Activated T-helper 1 cell treated with anti-CD3 and anti-CD28 coated beads, Interleukin-12 subunit alpha, Interleukin-12 subunit beta, Interleukin-2, Interleukin-4 antibody, amounts not matched to agents 30 ng/mL and 10 ng/mL and 1 ng/mL, durations not matched to agents 14 hours and 24 hours and 36 hours (primary cell): ENCODE measurements at regions of chr13 and their contacts with region 1.

Region 1: DNA sequence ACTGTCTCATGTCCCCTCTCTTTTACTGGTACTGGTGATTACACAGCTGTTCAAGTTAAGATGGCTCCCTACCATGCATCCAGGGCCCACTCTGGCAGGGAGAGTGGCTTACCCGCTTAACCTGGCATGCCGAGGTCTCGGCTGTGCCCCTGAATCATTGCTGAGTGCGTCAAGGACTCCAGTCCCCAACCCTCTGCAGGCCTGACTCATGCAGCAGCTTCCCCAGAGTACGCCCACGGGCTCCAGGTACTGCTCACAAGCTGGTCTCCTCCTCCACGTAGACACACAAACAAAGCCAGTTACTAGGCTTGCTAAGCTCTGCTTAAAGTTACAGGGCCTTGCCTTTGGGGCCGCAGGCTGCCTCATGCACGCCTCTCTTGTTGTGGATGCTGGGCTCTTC is 447.4 kb downstream of the COG6 start:
- DNase-seq: peak; percentile 51
- H3K4me3 Mint-ChIP-seq: peak overlapping the region; percentile 74
- H3K27ac Mint-ChIP-seq: peak overlapping the region; percentile 97
- H3K4me1 Mint-ChIP-seq: peaks cover 64% of the 10 kb centered on the region
- H3K27me3 Mint-ChIP-seq: no peaks in the 10 kb centered on the region

Region 2: DNA sequence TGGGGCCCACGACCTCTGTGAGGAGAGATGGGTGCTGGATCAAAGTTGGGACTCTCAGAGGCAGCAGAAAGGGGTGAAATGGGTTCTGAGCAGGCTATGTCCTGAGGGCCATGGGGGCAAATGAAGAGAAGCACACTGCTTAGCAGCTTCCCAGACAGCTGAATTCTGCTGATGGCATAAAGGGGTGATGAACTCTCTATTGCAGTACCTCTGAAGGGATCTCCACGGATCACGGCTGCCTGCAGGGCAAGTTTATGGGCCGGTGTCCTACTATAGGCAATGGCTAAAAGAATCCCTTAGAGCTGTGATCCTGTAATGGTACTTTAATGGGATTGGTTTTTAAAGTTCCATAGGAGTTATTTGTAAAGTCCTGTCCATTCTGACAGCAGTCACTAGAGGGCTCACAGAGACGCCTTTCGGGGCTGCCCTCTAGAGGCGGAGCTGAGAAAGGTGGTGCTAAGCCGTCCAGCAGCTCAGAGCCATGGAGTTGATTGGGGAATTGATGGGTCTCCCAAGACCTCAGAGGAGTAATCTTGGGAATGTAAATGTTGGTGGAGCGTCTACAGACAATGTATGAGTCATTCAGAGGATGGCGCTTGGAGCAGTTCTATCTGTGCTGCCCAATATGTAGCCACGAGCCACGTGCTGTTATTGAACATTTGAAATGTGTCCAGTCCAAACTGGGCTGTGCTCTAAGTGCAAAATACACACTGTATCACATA is 160.1 kb before region 1 on chr13:
- intact Hi-C with region 1: loop called (anchors 5 kb)
- DNase-seq: peak; percentile 54
- H3K4me3 Mint-ChIP-seq: no peak overlapping the region
- H3K27ac Mint-ChIP-seq: no peak overlapping the region
- H3K4me1 Mint-ChIP-seq: peaks cover 6% of the 10 kb centered on the region
- H3K27me3 Mint-ChIP-seq: peaks cover 4% of the 10 kb centered on the region

Region 3: DNA sequence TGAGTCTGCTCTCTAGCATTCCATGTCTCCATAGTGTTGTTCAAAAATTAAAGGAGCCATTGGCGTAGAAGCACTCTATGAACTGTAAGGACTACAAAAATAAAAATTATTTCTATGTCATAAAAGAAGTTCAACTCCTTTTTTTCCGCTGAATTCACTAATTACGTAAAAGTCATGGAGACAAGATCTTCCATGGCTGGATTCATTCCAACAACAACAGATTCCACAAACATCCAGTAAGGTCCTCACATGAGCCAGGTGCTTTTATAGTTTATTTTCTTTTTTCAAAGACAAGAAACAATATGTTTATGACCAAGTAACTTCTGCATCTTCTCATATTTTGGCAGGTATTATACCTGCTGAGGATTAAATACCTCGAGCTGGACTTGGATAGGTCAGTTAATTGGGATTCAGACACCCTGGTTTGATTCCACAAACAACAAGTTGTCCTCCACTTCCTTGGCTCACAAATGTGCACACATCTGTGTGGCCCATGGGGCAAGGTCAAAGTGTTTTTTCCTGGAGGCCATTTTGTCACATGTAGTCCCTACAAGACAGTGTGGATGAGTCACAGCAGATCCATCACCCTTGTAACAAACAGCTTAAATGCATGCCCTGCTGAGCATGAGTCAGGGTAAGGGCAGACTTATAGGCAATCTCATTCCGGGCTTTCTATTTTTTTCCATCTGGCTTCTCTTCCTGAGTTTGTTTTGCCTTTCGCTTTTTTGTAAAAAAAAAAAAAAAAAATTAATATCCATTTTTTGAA is 28.2 kb after region 1 on chr13:
- intact Hi-C with region 1: loop called (anchors 1 kb)
- DNase-seq: no peak
- H3K4me3 Mint-ChIP-seq: no peak overlapping the region
- H3K27ac Mint-ChIP-seq: peak overlapping the region; percentile 12
- H3K4me1 Mint-ChIP-seq: peaks cover 63% of the 10 kb centered on the region
- H3K27me3 Mint-ChIP-seq: no peaks in the 10 kb centered on the region

Region 4: DNA sequence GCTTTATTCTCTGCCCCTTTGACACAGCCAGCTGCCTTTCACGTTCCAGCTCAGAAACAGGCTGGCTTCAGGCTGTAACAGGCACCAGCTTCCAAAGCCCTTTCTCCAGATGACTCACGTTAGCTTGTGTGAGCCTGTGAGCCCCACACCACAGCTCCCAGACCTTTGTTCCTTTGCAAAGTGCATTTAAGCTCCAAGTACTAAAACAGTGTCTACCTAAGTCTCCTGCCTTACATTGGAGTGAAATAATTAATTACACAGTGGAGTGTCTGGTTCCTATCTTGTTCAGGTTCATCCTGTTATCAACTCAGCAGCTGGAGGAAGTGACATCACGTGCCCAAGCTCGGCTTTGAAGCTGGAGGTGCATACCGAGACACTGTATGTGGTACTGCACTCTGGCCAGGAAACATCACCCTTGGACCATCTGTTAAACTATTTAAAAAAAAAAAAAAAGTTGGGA is 87.8 kb after region 1 on chr13:
- intact Hi-C with region 1: loop called (anchors 1 kb)
- DNase-seq: peak; percentile 58
- H3K4me3 Mint-ChIP-seq: peak overlapping the region; percentile 35
- H3K27ac Mint-ChIP-seq: peak overlapping the region; percentile 87
- H3K4me1 Mint-ChIP-seq: peaks cover 66% of the 10 kb centered on the region
- H3K27me3 Mint-ChIP-seq: no peaks in the 10 kb centered on the region

Region 5: DNA sequence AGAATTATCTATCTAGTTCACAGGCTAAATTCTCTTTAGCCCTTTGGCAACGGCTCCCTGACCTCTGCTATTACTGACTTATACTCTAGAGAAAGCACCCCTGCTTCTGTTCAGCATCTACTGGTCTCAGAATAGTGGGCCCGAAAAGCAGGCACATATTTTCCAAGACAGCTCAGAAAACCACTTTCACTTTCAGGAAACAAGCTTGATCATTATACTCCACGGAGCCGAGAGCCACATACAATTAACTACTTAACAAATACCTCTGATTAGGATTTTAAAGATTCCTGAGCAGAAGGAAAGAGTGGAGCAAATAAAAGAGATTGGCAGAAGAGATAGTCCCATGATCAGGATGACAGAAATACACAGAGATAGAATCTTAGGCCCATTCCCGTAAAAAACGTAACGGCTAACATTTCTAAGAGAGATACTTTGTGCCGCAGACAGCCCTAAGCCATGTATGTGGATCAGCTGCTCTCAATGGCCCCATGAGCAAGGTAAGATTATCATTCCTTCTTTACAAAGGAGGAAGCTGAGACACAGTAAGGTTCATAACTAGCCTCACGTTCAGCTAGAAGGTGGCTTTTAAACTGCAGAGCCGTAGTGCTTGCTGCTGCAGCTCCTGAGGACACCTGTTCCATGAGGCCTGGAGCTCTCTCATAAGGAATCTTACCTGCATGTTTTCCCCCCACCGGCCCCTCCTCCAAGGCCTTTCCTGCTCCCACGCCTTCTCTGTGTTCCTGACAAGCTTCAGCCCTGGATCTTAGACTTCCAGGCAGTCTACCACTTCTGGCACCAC is 336.3 kb after region 1 on chr13:
- intact Hi-C with region 1: loop called (anchors 2 kb)
- DNase-seq: no peak
- H3K4me3 Mint-ChIP-seq: peak overlapping the region; percentile 23
- H3K27ac Mint-ChIP-seq: peak overlapping the region; percentile 73
- H3K4me1 Mint-ChIP-seq: peaks cover 33% of the 10 kb centered on the region
- H3K27me3 Mint-ChIP-seq: peaks cover 2% of the 10 kb centered on the region

Region 6: GRCh38 chr13:41019011-41019487 is 916.2 kb after region 1 on chr13 and contains the start of gene ELF1:
- intact Hi-C with region 1: loop called (anchors 1 kb)
- DNase-seq: peak; percentile 49
- H3K4me3 Mint-ChIP-seq: peak within 1 kb of the TSS; percentile 91
- H3K27ac Mint-ChIP-seq: peak within 1 kb of the TSS; percentile 97
- H3K4me1 Mint-ChIP-seq: peaks cover 53% of the 10 kb centered on the region
- H3K27me3 Mint-ChIP-seq: no peaks in the 10 kb centered on the region
- total RNA-seq, gene ELF1: 75.3 and 76.8 TPM in 2 replicates